ENCODE measurements at regions of chr6 and their contacts with region 1.

Region 1: DNA sequence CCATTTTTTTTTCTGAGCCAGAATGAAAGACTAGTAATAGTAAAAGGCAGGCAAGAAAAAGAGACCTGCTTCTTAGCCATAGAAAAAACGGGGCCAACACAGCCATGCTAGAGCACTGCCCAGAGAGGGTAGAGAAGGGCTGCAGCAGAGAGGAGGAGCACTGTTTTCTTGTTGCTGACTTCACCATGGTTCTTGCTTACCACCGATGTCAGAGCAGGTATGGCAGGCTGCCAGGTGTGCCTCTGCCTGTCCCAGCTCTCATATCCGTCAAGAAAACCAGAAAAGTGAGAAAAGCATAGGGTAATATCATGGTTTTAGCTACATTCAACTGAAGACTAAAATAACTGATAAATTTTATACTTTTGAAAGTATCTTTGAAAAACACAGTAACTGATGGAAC is 60.7 kb downstream of the DTNBP1 start:
- DNase-seq: peak in 1 of 2 donors; percentile 25
- ATAC-seq: no peak
- H3K4me3 ChIP-seq: no peak overlapping the region
- H3K27ac ChIP-seq: no peak overlapping the region
- H3K4me1 ChIP-seq: peaks cover 0 to 4% (median 0%) of the 10 kb centered on the region in 9 donors
- H3K27me3 ChIP-seq: no peaks in the 10 kb centered on the region
- CTCF ChIP-seq: no peak

Region 2: GRCh38 chr6:15526212-15526701 is 75.9 kb before region 1 on chr6:
- intact Hi-C with region 1: loop called in 1 of 10 experiments (anchors 5 kb)
- DNase-seq: no peak
- ATAC-seq: peak in 2 of 8 donors; percentile 53 to 56
- H3K4me3 ChIP-seq: no peak overlapping the region
- H3K27ac ChIP-seq: no peak overlapping the region
- H3K4me1 ChIP-seq: peaks cover 0 to 25% (median 0%) of the 10 kb centered on the region in 9 donors
- H3K27me3 ChIP-seq: no peaks in the 10 kb centered on the region
- CTCF ChIP-seq: no peak

Region 3: GRCh38 chr6:16089232-16090062 is 487.3 kb after region 1 on chr6:
- intact Hi-C with region 1: no loop called
- DNase-seq: no peak
- ATAC-seq: no peak
- H3K4me3 ChIP-seq: no peak overlapping the region
- H3K27ac ChIP-seq: no peak overlapping the region
- H3K4me1 ChIP-seq: peaks cover 0 to 16% (median 0%) of the 10 kb centered on the region in 9 donors
- H3K27me3 ChIP-seq: no peaks in the 10 kb centered on the region
- CTCF ChIP-seq: no peak